CD14-positive monocyte (primary cell): ENCODE measurements at regions of chr4 and their contacts with region 1.

Region 1: GRCh38 chr4:109815151-109816081 is at the start of gene GAR1:
- DNase-seq: peak; percentile 87 to 89 (median 87)
- H3K4me3 ChIP-seq: peak within 1 kb of the TSS; percentile 42 to 86 (median 75)
- H3K4me3 Mint-ChIP-seq: peak within 1 kb of the TSS; percentile 97 to 98
- H3K27ac ChIP-seq: peak within 1 kb of the TSS; percentile 79 to 97
- H3K27ac Mint-ChIP-seq: peak within 1 kb of the TSS; percentile 96 to 99 (median 97)
- H3K4me1 ChIP-seq: peaks cover 20 to 29% of the 10 kb centered on the region in 2 donors
- H3K4me1 Mint-ChIP-seq: peaks cover 31% of the 10 kb centered on the region
- H3K27me3 ChIP-seq: no peaks in the 10 kb centered on the region
- H3K27me3 Mint-ChIP-seq: peaks cover 0 to 1% (median 0%) of the 10 kb centered on the region in 3 donors
- CTCF ChIP-seq: no peak
- polyA plus RNA-seq, gene GAR1: 4.3 to 8.7 (median 4.7) TPM

Region 2: DNA sequence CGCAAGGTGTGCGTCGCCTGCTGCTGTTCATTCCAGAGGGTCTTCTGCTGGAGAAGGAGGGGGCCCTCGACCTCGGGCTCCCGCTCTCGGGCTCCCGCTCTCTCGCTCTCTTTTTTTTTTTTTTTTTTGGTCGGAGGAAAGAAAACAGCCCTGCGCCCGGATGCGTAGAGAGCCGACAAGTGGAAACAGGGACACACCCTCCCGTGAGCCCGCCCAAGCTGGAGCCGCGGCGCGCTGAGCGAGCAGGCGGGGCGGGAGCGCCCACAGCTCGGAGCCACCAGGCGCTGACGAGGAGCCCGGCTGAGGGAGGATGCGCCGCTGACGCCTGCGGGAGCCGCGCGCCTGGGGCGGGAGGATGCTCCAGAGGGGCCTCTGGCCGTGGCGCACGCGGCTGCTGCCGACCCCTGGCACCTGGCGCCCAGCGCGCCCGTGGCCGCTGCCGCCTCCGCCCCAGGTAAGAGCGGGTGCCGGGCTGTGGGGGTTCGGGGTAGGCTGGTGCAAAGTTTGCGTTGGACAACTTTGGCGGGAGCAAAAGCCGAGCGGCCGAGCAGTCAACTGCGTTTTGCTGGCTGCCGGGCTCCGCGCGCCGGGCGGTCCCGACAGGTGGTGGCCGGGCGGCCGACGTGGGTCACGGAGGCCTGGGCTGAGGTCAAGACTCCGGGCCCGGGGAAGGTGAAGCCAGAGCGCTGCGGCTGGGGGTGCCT is 255.3 kb before region 1 on chr4 and contains the start of gene MCUB:
- intact Hi-C with region 1: loop called in 1 of 2 experiments (anchors 5 kb)
- DNase-seq: peak; percentile 75 to 87 (median 79)
- H3K4me3 ChIP-seq: peak within 1 kb of the TSS; percentile 63 to 96 (median 89)
- H3K4me3 Mint-ChIP-seq: peak within 1 kb of the TSS; percentile 91 to 97
- H3K27ac ChIP-seq: peak within 1 kb of the TSS; percentile 93 to 97
- H3K27ac Mint-ChIP-seq: peak within 1 kb of the TSS; percentile 96 to 99 (median 98)
- H3K4me1 ChIP-seq: peaks cover 23 to 35% of the 10 kb centered on the region in 2 donors
- H3K4me1 Mint-ChIP-seq: peaks cover 52% of the 10 kb centered on the region
- H3K27me3 ChIP-seq: no peaks in the 10 kb centered on the region
- H3K27me3 Mint-ChIP-seq: peaks cover 3 to 6% (median 4%) of the 10 kb centered on the region in 3 donors
- CTCF ChIP-seq: no peak
- polyA plus RNA-seq, gene MCUB: 117 to 125 (median 123) TPM

Region 3: DNA sequence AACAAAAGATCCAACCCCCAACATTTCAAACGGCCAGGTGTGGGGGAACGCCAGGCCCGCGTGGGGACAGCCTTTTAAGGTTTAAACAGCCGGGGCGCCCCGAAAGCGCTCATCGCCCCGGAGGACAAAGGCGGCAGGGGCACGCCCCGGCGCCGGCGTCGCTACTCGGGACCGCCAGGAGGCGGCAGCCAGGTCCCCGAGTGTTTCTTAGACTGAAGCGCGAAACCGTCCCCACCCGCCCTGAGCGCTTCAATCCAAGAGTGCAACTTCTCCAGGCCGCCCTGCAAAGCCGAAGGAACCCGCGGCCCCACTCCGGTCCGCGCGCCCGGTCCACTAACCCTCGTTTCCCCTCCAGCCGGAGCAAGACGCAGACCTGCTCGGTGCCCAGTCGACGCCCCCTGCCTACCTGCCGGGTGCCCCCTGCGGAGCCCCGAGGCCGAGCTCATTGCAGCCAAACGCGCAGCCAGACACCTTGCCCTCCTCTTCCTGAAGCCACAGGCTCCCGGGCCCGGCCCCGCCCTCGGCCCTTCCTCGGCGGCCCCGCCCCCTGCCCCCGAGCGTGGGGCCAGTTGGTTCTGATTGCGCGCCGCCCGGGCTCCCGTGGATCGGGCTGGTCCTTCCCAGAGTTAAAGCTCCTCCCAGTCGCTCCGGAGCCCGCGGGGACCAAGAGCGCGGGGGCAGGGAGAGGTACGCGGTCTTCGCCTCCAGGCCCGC is 112.3 kb before region 1 on chr4 and contains the start of gene CASP6:
- intact Hi-C with region 1: loop called (anchors 10 kb)
- DNase-seq: peak; percentile 58 to 63 (median 62)
- H3K4me3 ChIP-seq: peak within 1 kb of the TSS; percentile 52 to 93 (median 68)
- H3K4me3 Mint-ChIP-seq: peak within 1 kb of the TSS; percentile 94 to 97
- H3K27ac ChIP-seq: peak within 1 kb of the TSS; percentile 52 to 69
- H3K27ac Mint-ChIP-seq: peak within 1 kb of the TSS; percentile 77 to 89 (median 83)
- H3K4me1 ChIP-seq: peaks cover 21 to 30% of the 10 kb centered on the region in 2 donors
- H3K4me1 Mint-ChIP-seq: peaks cover 29% of the 10 kb centered on the region
- H3K27me3 ChIP-seq: no peaks in the 10 kb centered on the region
- H3K27me3 Mint-ChIP-seq: peaks cover 0 to 2% (median 2%) of the 10 kb centered on the region in 3 donors
- CTCF ChIP-seq: peak; percentile 77
- polyA plus RNA-seq, gene CASP6: 4.7 to 24.4 (median 23.3) TPM